AG04449 (cell line): ENCODE measurements at regions of chr22 and their contacts with region 1.

Region 1: GRCh38 chr22:21778705-21779363 is 43.2 kb upstream of the YPEL1 start:
- DNase-seq: peak; percentile 36
- H3K4me3 ChIP-seq: no peak overlapping the region
- CTCF ChIP-seq: no peak

Region 2: GRCh38 chr22:21760640-21761039 is 18.2 kb before region 1 on chr22:
- CTCF ChIA-PET with region 1: interaction called, 13 read pairs
- POLR2A ChIA-PET with region 1: interaction called, 3 read pairs
- DNase-seq: peak; percentile 64
- H3K4me3 ChIP-seq: no peak overlapping the region
- CTCF ChIP-seq: no peak

Region 3: GRCh38 chr22:21816787-21817496 is 38.1 kb after region 1 on chr22:
- CTCF ChIA-PET with region 1: no interaction called
- POLR2A ChIA-PET with region 1: no interaction called
- DNase-seq: peak; percentile 73
- H3K4me3 ChIP-seq: no peak overlapping the region
- CTCF ChIP-seq: no peak